CD4-positive, alpha-beta T cell (primary cell): ENCODE measurements at regions of chr5 and their contacts with region 1.

Region 1: GRCh38 chr5:160439205-160439600 is 17.5 kb downstream of the PTTG1 start:
- DNase-seq: peak; percentile 75 to 94 (median 88)
- ATAC-seq: peak; percentile 84
- H3K4me3 ChIP-seq: peak overlapping the region; percentile 61
- H3K4me3 Mint-ChIP-seq: peak overlapping the region; percentile 85
- H3K27ac ChIP-seq: peak overlapping the region in 1 of 2 donors; percentile 37
- H3K27ac Mint-ChIP-seq: peak overlapping the region; percentile 58
- H3K4me1 ChIP-seq: peaks cover 18% of the 10 kb centered on the region
- H3K4me1 Mint-ChIP-seq: peaks cover 4% of the 10 kb centered on the region
- H3K27me3 ChIP-seq: no peaks in the 10 kb centered on the region
- H3K27me3 Mint-ChIP-seq: peaks cover 3% of the 10 kb centered on the region
- CTCF ChIP-seq: peak; percentile 81

Region 2: DNA sequence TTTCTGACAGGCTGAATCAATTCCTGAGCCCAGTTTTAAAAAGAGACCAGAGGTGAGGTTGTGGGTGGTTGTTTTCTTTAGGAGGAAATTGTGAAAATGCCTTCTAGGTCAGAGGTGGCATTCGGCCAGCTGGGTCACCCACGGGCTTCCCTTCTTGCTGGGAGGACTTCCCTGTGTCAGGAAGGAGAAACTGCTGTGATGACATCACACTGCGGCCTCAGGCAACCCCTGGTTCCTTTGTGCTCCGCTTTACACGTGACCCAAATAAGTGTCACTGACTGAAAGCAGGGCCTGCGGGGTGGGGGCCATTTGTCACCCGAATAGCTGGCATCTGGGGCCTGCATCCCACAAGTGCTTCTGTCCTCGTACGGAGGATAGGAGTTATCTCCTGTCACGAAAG is 170.2 kb before region 1 on chr5:
- CTCF ChIA-PET with region 1: no interaction called
- POLR2A ChIA-PET with region 1: no interaction called
- intact Hi-C with region 1: no loop called
- DNase-seq: peak in 3 of 14 experiments; percentile 36 to 79 (median 71)
- ATAC-seq: no peak
- H3K4me3 ChIP-seq: no peak overlapping the region
- H3K4me3 Mint-ChIP-seq: no peak overlapping the region
- H3K27ac ChIP-seq: no peak overlapping the region
- H3K27ac Mint-ChIP-seq: no peak overlapping the region
- H3K4me1 ChIP-seq: peaks cover 2% of the 10 kb centered on the region
- H3K4me1 Mint-ChIP-seq: peaks cover 5% of the 10 kb centered on the region
- H3K27me3 ChIP-seq: no peaks in the 10 kb centered on the region
- H3K27me3 Mint-ChIP-seq: no peaks in the 10 kb centered on the region
- CTCF ChIP-seq: no peak

Region 3: GRCh38 chr5:160427607-160428006 is 11.6 kb before region 1 on chr5:
- CTCF ChIA-PET with region 1: interaction called, 114 read pairs
- POLR2A ChIA-PET with region 1: interaction called, 24 read pairs
- intact Hi-C with region 1: no loop called
- DNase-seq: no peak
- ATAC-seq: no peak
- H3K4me3 ChIP-seq: no peak overlapping the region
- H3K4me3 Mint-ChIP-seq: no peak overlapping the region
- H3K27ac ChIP-seq: no peak overlapping the region
- H3K27ac Mint-ChIP-seq: no peak overlapping the region
- H3K4me1 ChIP-seq: peaks cover 8% of the 10 kb centered on the region
- H3K4me1 Mint-ChIP-seq: peaks cover 32% of the 10 kb centered on the region
- H3K27me3 ChIP-seq: no peaks in the 10 kb centered on the region
- H3K27me3 Mint-ChIP-seq: no peaks in the 10 kb centered on the region
- CTCF ChIP-seq: no peak

Region 4: GRCh38 chr5:160467555-160468362 is 28.6 kb after region 1 on chr5:
- CTCF ChIA-PET with region 1: interaction called, 43 read pairs
- POLR2A ChIA-PET with region 1: interaction called, 27 read pairs
- intact Hi-C with region 1: loop called in 1 of 2 experiments (anchors 2 kb)
- DNase-seq: peak; percentile 37 to 91 (median 60)
- ATAC-seq: peak; percentile 84
- H3K4me3 ChIP-seq: peak overlapping the region; percentile 69
- H3K4me3 Mint-ChIP-seq: peak overlapping the region; percentile 94
- H3K27ac ChIP-seq: peak overlapping the region; percentile 50 to 64
- H3K27ac Mint-ChIP-seq: peak overlapping the region; percentile 88
- H3K4me1 ChIP-seq: peaks cover 44% of the 10 kb centered on the region
- H3K4me1 Mint-ChIP-seq: peaks cover 86% of the 10 kb centered on the region
- H3K27me3 ChIP-seq: no peaks in the 10 kb centered on the region
- H3K27me3 Mint-ChIP-seq: no peaks in the 10 kb centered on the region
- CTCF ChIP-seq: no peak

Region 5: GRCh38 chr5:160479926-160480325 is 40.7 kb after region 1 on chr5:
- CTCF ChIA-PET with region 1: interaction called, 36 read pairs
- POLR2A ChIA-PET with region 1: interaction called, 5 read pairs
- intact Hi-C with region 1: no loop called
- DNase-seq: no peak
- ATAC-seq: no peak
- H3K4me3 ChIP-seq: no peak overlapping the region
- H3K4me3 Mint-ChIP-seq: peak overlapping the region; percentile 52
- H3K27ac ChIP-seq: no peak overlapping the region
- H3K27ac Mint-ChIP-seq: peak overlapping the region; percentile 88
- H3K4me1 ChIP-seq: peaks cover 52% of the 10 kb centered on the region
- H3K4me1 Mint-ChIP-seq: peaks cover 59% of the 10 kb centered on the region
- H3K27me3 ChIP-seq: no peaks in the 10 kb centered on the region
- H3K27me3 Mint-ChIP-seq: no peaks in the 10 kb centered on the region
- CTCF ChIP-seq: no peak

Region 6: DNA sequence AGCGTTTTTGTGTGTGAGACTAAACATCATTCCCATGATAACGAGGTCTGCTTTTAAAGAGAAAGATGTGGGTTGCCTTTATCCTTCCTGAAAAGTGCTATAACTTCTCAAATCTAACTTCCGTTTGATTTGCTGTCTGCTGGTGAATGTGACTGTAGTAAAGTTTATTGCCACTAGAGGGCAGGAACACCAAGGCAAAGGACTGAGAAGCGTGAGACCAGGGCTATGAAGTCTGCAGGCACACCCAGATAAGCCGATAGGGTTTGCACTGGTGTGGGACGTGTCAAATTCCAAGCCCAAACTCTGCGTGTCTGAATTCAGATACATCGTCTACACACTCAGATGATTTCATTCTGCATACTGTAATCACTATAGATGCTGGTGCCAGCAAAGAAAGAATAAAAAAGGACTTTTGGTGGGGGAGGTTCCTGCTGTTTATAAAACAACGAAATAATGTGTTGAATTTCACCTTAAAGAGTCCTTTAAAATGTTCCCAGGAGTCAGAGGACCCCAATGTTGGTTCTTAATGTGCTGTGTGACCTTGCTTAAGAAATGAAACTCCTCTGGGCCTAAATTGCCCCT is 69.7 kb after region 1 on chr5:
- CTCF ChIA-PET with region 1: interaction called, 32 read pairs
- POLR2A ChIA-PET with region 1: interaction called, 21 read pairs
- intact Hi-C with region 1: loop called (anchors 1 to 2 kb)
- DNase-seq: peak; percentile 22 to 91 (median 48)
- ATAC-seq: peak; percentile 72
- H3K4me3 ChIP-seq: no peak overlapping the region
- H3K4me3 Mint-ChIP-seq: peak overlapping the region; percentile 22
- H3K27ac ChIP-seq: no peak overlapping the region
- H3K27ac Mint-ChIP-seq: peak overlapping the region; percentile 29
- H3K4me1 ChIP-seq: peaks cover 40% of the 10 kb centered on the region
- H3K4me1 Mint-ChIP-seq: peaks cover 28% of the 10 kb centered on the region
- H3K27me3 ChIP-seq: no peaks in the 10 kb centered on the region
- H3K27me3 Mint-ChIP-seq: no peaks in the 10 kb centered on the region
- CTCF ChIP-seq: peak; percentile 83

Region 7: DNA sequence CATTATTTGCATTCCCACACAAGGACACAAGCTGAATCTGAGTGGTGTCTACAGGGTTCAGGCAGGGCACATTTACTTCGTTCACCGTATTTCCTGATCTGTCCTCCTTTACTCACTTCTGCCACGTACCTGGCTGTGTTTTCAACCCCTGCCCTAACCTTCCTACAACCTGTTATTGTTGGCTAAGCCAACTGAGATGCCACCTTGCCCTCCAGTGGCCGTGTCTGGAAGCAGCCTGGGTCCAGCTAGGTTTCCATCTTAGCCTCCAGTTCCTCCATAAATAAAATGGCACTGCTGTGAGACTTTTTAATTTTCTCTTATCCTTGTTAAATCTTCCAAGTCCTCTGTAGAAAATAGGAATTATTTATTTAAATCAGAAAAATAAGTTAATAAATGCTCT is 348.0 kb after region 1 on chr5:
- CTCF ChIA-PET with region 1: interaction called, 5 read pairs
- POLR2A ChIA-PET with region 1: no interaction called
- intact Hi-C with region 1: loop called in 1 of 2 experiments (anchors 5 kb)
- DNase-seq: peak in 4 of 14 experiments; percentile 7 to 38 (median 21)
- ATAC-seq: no peak
- H3K4me3 ChIP-seq: no peak overlapping the region
- H3K4me3 Mint-ChIP-seq: no peak overlapping the region
- H3K27ac ChIP-seq: no peak overlapping the region
- H3K27ac Mint-ChIP-seq: no peak overlapping the region
- H3K4me1 ChIP-seq: no peaks in the 10 kb centered on the region
- H3K4me1 Mint-ChIP-seq: no peaks in the 10 kb centered on the region
- H3K27me3 ChIP-seq: peaks cover 0 to 2% of the 10 kb centered on the region in 2 experiments
- H3K27me3 Mint-ChIP-seq: peaks cover 4% of the 10 kb centered on the region
- CTCF ChIP-seq: no peak